ENCODE measurements at regions of chr22 and their contacts with region 1.

Region 1: GRCh38 chr22:46064228-46064965 is 85.9 kb upstream of the PPARA start:
- DNase-seq: peak; percentile 70
- H3K4me3 ChIP-seq: peak overlapping the region; percentile 38 to 69
- H3K27ac ChIP-seq: peak overlapping the region; percentile 100
- H3K4me1 ChIP-seq: peaks cover 34 to 54% of the 10 kb centered on the region in 2 experiments; a peak in 3 of 4 replicates
- H3K27me3 ChIP-seq: no peaks in the 10 kb centered on the region
- CTCF ChIP-seq: no peak
- EP300 ChIP-seq: no peak
- RAD21 ChIP-seq: no peak

Region 2: DNA sequence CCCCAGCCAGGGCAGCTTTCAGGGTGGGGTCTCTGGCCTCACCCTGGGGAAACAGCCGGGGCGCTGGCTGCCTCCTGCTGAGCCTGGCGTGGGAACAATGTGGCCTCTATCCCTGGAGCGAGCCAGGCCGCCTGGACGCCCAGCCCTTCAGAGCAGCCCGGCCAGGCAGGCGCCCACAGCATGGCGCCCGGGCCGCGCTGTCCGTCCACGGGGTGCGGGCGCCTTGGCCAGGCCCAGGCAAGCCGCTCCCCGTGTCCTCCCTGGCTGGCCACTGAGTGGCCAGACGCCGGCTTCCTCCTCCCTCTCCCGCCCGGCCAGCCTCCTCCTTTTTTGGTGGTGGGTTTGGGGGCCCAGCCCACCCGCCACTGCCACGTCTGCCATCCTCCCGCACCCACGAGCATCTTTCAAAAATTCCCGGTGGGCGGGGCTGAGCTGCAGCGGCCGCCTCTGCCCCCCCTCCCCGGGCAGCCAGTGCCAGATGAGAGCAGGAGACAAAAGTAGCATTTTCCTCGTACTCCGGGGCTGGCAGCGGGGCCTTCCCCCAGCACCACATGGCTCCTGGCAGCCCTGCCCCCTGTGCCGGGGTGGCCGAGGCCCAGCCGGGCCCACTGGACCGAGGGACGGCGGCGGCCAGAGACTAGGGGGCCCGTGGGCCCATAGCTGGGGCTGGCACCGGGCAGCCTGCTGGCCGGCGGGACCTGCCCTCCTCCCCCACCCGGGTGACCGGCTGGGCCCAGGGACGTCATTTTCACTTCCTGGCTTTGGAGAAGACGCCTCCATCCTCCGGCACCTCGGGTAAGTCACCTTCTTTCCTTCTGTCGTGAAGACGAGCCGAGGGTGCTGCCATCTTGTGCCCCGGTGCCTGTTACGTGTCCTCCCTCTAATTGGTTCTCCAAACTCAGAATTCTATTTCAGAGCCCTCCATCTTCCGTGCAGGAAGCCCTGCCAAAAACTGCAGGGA is 15.7 kb after region 1 on chr22:
- CTCF ChIA-PET with region 1: interaction called, 15 read pairs
- POLR2A ChIA-PET with region 1: interaction called, 21 read pairs
- DNase-seq: peak; percentile 85
- H3K4me3 ChIP-seq: peak overlapping the region; percentile 90 to 92
- H3K27ac ChIP-seq: peak overlapping the region; percentile 96 to 100
- H3K4me1 ChIP-seq: peaks cover 11 to 66% of the 10 kb centered on the region in 2 experiments; a peak in 3 of 4 replicates
- H3K27me3 ChIP-seq: no peaks in the 10 kb centered on the region
- CTCF ChIP-seq: no peak
- EP300 ChIP-seq: peak in 1 of 2 experiments; percentile 31; a peak in 2 of 4 replicates
- RAD21 ChIP-seq: no peak

Region 3: DNA sequence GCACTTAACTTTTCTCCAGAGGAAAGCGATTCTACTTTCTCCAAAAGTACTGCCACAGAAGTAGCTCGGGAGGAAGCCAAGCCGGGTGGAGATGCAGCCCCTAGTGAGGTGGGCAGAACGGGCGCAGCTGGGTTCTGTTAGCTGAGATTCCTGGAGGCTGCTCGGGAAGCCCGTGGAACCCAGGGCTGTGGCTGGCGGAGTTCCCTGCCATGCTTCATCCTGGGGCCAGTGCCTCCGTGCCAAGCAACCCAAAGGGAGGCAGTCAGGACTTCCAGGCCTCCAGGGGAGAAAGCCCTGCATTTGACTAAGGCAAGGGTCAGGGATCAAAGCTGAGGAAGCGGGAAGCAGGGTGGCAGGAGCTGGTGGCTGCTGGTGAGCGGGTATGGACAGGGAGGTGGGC is 264.4 kb after region 1 on chr22:
- CTCF ChIA-PET with region 1: no interaction called
- POLR2A ChIA-PET with region 1: no interaction called
- DNase-seq: no peak
- H3K4me3 ChIP-seq: no peak overlapping the region
- H3K27ac ChIP-seq: no peak overlapping the region
- H3K4me1 ChIP-seq: no peaks in the 10 kb centered on the region
- H3K27me3 ChIP-seq: no peaks in the 10 kb centered on the region
- CTCF ChIP-seq: no peak
- EP300 ChIP-seq: no peak
- RAD21 ChIP-seq: no peak

Measured in SK-N-SH (cell line).